Gastrocnemius medialis (tissue), 4 donors: ENCODE measurements at regions of chr17 and their contacts with region 1.

Region 1: GRCh38 chr17:10875979-10876555 is 38.2 kb upstream of the PIRT start:
- DNase-seq: no peak
- ATAC-seq: no peak
- H3K4me3 ChIP-seq: no peak overlapping the region
- H3K27ac ChIP-seq: no peak overlapping the region
- H3K4me1 ChIP-seq: no peaks in the 10 kb centered on the region
- H3K27me3 ChIP-seq: no peaks in the 10 kb centered on the region
- CTCF ChIP-seq: peak; percentile 19 to 62 (median 54)
- POLR2A ChIP-seq: no peak

Region 2: DNA sequence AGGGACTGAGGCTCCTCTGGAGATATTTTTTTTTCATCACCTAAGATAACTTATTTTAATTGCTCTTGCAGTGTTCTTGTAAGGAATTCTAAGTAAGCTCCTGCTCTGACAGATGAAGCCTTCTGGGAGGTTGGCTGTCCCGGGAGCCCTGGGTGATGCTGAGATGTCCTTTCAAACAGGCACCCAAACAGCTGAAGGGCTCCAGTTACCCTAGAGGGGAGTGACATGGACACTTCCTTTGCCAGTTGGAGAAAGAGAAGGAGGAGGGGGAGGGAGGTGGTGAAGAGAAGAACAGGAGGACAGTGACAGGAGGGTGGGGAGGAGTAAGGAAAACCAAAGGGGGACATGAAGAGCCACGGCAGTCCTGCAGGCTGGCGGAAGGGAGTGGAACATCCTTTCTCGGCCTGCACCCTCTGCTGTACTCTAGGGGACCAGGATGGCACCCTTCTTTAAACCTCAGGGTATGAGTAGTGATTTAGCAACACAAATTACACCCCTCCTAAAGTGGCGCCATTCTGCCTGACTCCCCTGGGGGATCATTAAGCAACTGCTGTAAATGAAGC is 270.8 kb before region 1 on chr17:
- in situ Hi-C with region 1: no loop called
- intact Hi-C with region 1: no loop called
- DNase-seq: peak; percentile 31 to 83
- ATAC-seq: peak; percentile 74 to 75
- H3K4me3 ChIP-seq: no peak overlapping the region
- H3K27ac ChIP-seq: peak overlapping the region; percentile 70 to 89 (median 78)
- H3K4me1 ChIP-seq: peaks cover 0 to 10% of the 10 kb centered on the region in 2 donors
- H3K27me3 ChIP-seq: no peaks in the 10 kb centered on the region
- CTCF ChIP-seq: no peak
- POLR2A ChIP-seq: no peak

Region 3: DNA sequence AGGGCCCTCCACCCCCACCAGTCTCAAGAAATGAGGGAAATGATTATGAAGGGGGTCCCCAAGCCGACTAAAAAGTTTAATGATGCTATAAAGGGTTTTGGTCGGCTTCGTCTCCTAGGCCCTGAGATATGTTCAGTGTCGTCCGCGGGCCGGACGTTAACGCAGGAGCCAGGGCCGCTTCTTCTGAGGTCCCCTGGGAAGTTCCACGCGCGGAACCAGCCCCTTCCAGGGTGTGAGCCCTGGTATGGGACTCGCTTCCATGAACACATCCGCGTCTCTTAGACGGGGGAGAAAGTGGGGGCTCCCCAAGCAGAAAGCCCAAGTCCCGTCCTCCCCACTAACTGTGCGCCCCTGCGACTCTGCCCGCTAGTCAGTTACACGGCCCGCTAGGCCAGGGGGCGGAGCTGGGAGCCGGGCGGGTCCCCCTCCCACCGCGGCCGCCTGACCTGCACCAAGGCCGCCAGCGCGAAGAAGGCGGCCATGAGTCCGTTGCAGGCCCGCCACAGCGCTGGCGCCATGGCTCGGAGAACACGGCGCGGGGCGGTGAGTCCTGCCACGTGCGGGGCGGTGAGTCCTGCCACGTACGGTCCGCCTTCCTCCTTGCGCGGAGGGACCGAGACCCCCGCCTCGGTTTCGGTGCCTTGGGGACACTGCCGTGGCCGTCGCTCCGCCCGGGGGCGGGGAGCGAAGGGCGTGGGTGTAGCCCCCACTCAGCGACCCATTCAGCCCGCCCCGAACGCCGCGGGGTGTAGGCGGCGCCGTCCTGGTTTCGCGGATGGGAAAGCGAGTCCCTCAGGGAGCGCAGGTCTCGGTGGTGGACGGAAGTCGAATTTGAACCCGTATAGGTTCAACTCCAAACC is 146.5 kb before region 1 on chr17 and contains the start of gene TMEM220:
- in situ Hi-C with region 1: no loop called
- intact Hi-C with region 1: no loop called
- DNase-seq: peak; percentile 59 to 78
- ATAC-seq: peak; percentile 88 to 93
- H3K4me3 ChIP-seq: peak within 1 kb of the TSS; percentile 67 to 93 (median 82)
- H3K27ac ChIP-seq: peak within 1 kb of the TSS; percentile 92 to 97 (median 95)
- H3K4me1 ChIP-seq: no peaks in the 10 kb centered on the region
- H3K27me3 ChIP-seq: no peaks in the 10 kb centered on the region
- CTCF ChIP-seq: no peak
- POLR2A ChIP-seq: peak; percentile 61 to 77
- total RNA-seq, gene TMEM220: 3.7 to 8.6 (median 3.9) TPM

Region 4: DNA sequence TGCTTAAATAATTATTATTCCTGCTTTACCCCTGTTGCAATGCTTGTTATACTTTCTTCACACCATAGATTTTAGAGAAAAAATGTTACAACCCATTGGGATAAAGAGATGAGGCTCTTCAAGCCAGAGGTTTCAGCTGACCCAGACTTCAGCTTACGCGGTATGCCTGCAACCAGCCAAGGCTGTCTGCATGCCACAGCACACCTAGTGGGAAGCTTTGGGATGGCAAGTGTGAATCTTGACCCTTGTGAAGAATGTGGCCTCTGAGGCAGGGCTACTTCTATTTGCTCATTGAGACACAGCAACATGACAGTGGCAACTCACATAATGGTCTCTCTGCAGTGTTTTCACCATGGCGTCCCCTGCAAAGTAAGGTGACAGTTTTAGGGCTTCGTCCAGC is 155.7 kb after region 1 on chr17:
- in situ Hi-C with region 1: loop called in 1 of 4 experiments (anchors 25 kb)
- intact Hi-C with region 1: no loop called
- DNase-seq: no peak
- ATAC-seq: no peak
- H3K4me3 ChIP-seq: no peak overlapping the region
- H3K27ac ChIP-seq: no peak overlapping the region
- H3K4me1 ChIP-seq: no peaks in the 10 kb centered on the region
- H3K27me3 ChIP-seq: no peaks in the 10 kb centered on the region
- CTCF ChIP-seq: no peak
- POLR2A ChIP-seq: no peak

Region 5: GRCh38 chr17:11144358-11145233 is 268.5 kb after region 1 on chr17:
- in situ Hi-C with region 1: loop called in 3 of 4 experiments (anchors 10 to 25 kb)
- intact Hi-C with region 1: loop called (anchors 5 kb)
- DNase-seq: no peak
- ATAC-seq: no peak
- H3K4me3 ChIP-seq: no peak overlapping the region
- H3K27ac ChIP-seq: no peak overlapping the region
- H3K4me1 ChIP-seq: no peaks in the 10 kb centered on the region
- H3K27me3 ChIP-seq: no peaks in the 10 kb centered on the region
- CTCF ChIP-seq: peak in 3 of 5 experiments; percentile 16 to 48 (median 38)
- POLR2A ChIP-seq: no peak

Region 6: DNA sequence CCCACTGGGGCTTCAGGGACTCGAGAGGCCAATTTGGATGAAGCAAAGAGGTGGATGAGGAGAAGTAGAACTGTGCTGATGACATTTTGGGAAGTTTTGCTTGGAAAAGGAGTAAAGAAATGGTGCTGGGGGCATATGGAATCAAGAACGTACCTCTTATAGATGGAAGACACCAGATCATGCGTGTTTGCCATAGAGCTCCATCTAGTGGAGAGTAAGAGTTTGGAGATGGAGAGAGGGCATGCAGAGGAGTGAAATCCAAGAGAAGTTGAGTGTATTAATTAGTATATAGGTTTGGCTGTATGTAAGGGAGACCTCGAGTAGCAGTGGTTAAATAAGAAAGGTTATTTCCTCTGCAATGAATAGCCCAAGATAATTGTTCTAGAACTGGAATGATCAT is 420.9 kb after region 1 on chr17:
- in situ Hi-C with region 1: loop called in 1 of 4 experiments (anchors 25 kb)
- intact Hi-C with region 1: no loop called
- DNase-seq: no peak
- ATAC-seq: no peak
- H3K4me3 ChIP-seq: no peak overlapping the region
- H3K27ac ChIP-seq: no peak overlapping the region
- H3K4me1 ChIP-seq: no peaks in the 10 kb centered on the region
- H3K27me3 ChIP-seq: no peaks in the 10 kb centered on the region
- CTCF ChIP-seq: peak in 1 of 5 experiments; percentile 29
- POLR2A ChIP-seq: no peak

Region 7: DNA sequence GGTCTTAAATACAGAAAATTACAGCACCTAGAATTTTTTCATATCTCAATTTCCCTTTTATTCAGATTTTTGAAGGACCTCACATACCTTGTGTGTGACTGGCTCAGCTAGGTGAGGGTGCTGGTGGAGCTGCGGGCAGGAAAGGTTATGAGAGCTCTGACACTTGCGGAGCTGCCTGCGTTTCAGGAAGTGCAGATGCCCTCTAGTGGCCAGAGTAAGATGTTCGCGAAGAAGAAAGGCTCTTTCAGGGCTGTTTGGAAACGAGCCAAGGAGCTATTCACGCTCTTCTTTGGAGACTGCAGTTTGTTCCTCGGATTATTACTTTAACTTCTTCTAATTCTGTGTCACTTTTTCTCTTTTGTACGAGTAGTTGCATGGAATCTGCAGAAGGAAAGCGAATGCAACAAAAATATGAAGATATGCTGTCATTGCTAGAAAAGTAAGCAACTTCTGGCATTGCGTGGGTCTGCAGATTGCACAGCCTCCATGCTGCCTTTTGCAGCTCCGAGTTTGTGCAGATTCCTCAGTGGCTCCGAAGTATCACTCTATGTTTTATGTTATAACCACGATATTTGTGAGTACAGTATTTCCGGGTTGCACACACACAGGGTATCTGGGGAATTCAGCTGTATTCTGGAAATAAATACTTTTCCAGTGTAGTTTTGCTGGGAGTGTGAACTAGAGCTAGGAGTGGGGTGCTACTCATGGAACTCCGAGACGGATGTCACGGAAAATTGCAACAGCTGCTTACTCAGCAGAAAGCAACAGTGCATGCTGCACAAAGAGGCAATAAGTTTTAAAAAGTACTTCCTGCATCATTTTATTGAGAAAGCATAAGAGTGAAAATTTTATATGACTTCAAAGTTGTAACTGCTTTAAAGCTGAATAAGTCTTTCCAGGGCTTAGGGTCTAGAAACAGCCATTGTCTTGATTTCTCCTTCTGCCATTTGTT is 768.5 kb after region 1 on chr17:
- in situ Hi-C with region 1: loop called in 1 of 4 experiments (anchors 25 kb)
- intact Hi-C with region 1: no loop called
- DNase-seq: peak; percentile 19 to 29
- ATAC-seq: peak in 1 of 2 donors; percentile 39
- H3K4me3 ChIP-seq: no peak overlapping the region
- H3K27ac ChIP-seq: no peak overlapping the region
- H3K4me1 ChIP-seq: no peaks in the 10 kb centered on the region
- H3K27me3 ChIP-seq: no peaks in the 10 kb centered on the region
- CTCF ChIP-seq: peak in 4 of 5 experiments; percentile 12 to 62 (median 44)
- POLR2A ChIP-seq: no peak

Region 8: DNA sequence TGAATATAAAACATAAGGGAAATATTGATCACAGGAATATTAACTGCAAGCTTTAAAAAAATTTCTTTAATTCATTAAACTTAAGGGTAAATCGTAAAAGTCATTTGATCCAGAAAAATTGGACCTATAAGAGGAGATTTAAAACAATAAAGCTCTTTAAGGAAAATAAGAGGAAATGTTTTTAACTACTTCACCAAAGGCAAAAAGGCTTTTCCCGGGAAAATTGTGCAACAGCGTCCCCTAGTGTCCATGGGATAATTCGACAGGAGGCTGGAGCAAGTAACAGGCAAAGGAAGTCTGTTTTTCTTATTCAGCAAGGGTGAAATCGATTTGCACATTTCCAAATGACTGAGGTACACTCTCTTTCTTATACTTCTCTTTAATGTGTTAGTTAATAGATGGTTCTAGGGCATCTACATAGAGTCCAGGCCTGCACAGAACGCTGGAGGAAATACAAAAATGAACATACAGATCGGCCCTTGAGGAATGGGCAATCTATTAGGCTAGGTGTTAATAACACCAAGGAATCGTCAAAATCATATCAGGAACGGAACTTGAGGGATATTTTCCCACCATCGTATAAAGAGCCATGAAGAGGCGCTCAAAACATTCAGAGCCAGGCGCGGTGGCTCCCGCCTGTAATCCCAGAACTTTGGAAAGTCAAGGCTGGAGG is 1059.8 kb after region 1 on chr17:
- in situ Hi-C with region 1: loop called in 1 of 4 experiments (anchors 25 kb)
- intact Hi-C with region 1: no loop called
- DNase-seq: no peak
- ATAC-seq: no peak
- H3K4me3 ChIP-seq: no peak overlapping the region
- H3K27ac ChIP-seq: no peak overlapping the region
- H3K4me1 ChIP-seq: no peaks in the 10 kb centered on the region
- H3K27me3 ChIP-seq: no peaks in the 10 kb centered on the region
- CTCF ChIP-seq: peak; percentile 30 to 66 (median 42)
- POLR2A ChIP-seq: no peak